ENCODE measurements at regions of chr14 and their contacts with region 1.

Region 1: DNA sequence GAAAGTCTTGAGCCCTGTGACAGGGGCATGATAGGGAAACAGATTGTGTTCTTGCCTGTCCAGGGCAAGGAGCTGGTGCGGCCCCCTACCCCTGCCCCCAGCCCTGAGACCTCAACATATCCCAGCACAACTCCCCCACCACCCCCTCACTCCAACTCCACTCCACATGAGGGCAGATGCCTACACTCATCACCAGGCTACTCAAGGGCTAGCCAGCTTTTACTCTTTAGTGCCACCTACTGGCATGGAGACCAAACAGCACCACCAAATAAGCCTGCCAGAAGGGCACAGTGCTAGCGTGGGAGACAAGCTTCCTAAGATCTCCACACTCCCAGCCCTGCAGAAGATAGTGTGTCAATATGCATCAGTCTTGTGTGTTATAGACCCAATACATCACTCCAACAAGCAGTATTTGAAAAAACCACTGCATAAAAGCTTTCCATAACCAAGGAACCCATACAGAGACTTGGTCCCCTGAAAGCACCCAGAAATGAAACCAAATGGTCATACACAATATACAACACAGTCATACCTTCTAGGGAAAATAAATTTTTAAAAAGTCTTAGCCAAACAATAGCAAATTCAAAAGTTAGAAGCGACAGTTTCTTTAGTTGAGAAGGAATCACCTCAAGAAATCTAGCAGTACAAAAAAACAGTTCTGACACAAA is 154.4 kb downstream of the KCNK10 start:
- DNase-seq: peak; percentile 61
- CTCF ChIP-seq: peak; percentile 90

Region 2: GRCh38 chr14:88023658-88024187 is 144.9 kb before region 1 on chr14:
- in situ Hi-C with region 1: loop called (anchors 10 kb)
- DNase-seq: no peak
- CTCF ChIP-seq: no peak

Region 3: DNA sequence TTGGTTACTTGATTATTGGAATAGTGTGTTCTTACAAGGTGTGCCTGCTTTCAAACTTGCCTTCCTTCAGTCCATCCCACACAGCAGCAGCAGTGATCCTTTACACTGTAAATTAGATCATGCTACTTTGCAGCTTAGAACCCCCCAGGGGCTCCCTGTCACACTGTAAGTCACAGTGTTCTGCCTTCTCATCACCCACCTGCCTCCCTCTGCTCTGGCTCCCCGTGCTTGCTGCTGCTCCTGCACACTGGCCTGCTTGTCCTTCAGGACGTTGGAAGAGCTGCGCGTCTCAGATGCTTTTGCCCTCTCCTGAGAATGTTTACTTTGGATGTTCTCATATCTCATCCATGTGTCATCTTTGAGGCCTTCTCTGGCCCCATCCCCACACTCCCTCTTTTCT is 421.5 kb after region 1 on chr14:
- in situ Hi-C with region 1: no loop called
- DNase-seq: no peak
- CTCF ChIP-seq: no peak